Endothelial cell of umbilical vein (primary cell): ENCODE measurements at regions of chr19 and their contacts with region 1.

Region 1: GRCh38 chr19:11137542-11138384 is 17.8 kb downstream of the SPC24 start:
- DNase-seq: peak; percentile 53
- H3K4me3 ChIP-seq: no peak overlapping the region
- H3K27ac ChIP-seq: peak overlapping the region; percentile 22
- H3K4me1 ChIP-seq: peaks cover 36% of the 10 kb centered on the region
- H3K27me3 ChIP-seq: no peaks in the 10 kb centered on the region
- CTCF ChIP-seq: peak; percentile 28 to 43
- POLR2A ChIP-seq: peak; percentile 17

Region 2: GRCh38 chr19:11155373-11156120 is 17.8 kb after region 1 on chr19 and contains the start of gene SPC24:
- CTCF ChIA-PET with region 1: interaction called, 13 read pairs
- POLR2A ChIA-PET with region 1: interaction called, 4 read pairs
- dilution Hi-C with region 1: no loop called
- intact Hi-C with region 1: loop called (anchors 2 kb)
- DNase-seq: peak; percentile 99
- H3K4me3 ChIP-seq: peak within 1 kb of the TSS; percentile 73 to 97 (median 94)
- H3K27ac ChIP-seq: peak within 1 kb of the TSS; percentile 75
- H3K4me1 ChIP-seq: peaks cover 28% of the 10 kb centered on the region
- H3K27me3 ChIP-seq: no peaks in the 10 kb centered on the region
- CTCF ChIP-seq: no peak
- POLR2A ChIP-seq: peak; percentile 55
- total RNA-seq, gene SPC24: 68.5 and 70.0 TPM in 2 replicates

Region 3: DNA sequence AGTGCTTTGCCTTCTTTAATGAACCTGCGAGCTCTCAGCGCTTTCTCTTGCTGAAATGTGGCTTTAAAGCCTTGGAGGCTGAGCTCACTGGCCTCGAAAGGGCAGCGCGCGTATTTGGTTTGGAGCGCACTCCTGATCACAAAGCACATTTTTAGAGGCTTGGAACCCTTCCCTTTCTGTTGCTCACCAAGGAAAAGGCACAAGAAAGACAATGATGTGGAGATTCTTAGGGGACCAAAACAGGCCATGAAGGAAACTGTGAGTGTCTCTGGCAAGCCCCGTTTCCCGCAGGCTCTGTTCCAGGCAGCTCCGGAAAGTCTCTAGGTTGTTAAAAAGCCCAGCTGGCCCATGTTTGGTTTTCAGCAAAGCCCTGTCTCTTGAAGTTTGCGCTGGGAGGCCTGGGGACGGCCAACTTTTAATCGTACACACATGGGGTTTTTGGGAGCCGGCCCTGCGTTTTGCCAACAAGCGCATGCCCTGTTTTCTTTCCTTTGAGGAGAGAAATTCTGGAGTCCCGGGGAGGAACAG is 27.2 kb after region 1 on chr19:
- CTCF ChIA-PET with region 1: interaction called, 14 read pairs
- POLR2A ChIA-PET with region 1: interaction called, 5 read pairs
- dilution Hi-C with region 1: no loop called
- intact Hi-C with region 1: loop called (anchors 1 kb)
- DNase-seq: peak; percentile 51
- H3K4me3 ChIP-seq: no peak overlapping the region
- H3K27ac ChIP-seq: peak overlapping the region; percentile 35
- H3K4me1 ChIP-seq: peaks cover 31% of the 10 kb centered on the region
- H3K27me3 ChIP-seq: no peaks in the 10 kb centered on the region
- CTCF ChIP-seq: no peak
- POLR2A ChIP-seq: no peak

Region 4: GRCh38 chr19:11197264-11198174 is 59.8 kb after region 1 on chr19 and contains the start of gene KANK2:
- CTCF ChIA-PET with region 1: interaction called, 10 read pairs
- POLR2A ChIA-PET with region 1: no interaction called
- dilution Hi-C with region 1: no loop called
- intact Hi-C with region 1: loop called (anchors 2 kb)
- DNase-seq: peak; percentile 71
- H3K4me3 ChIP-seq: peak within 1 kb of the TSS; percentile 52 to 87 (median 69)
- H3K27ac ChIP-seq: peak within 1 kb of the TSS; percentile 71
- H3K4me1 ChIP-seq: peaks cover 19% of the 10 kb centered on the region
- H3K27me3 ChIP-seq: no peaks in the 10 kb centered on the region
- CTCF ChIP-seq: no peak
- POLR2A ChIP-seq: peak; percentile 84
- total RNA-seq, gene KANK2: 77.9 and 78.0 TPM in 2 replicates

Region 5: DNA sequence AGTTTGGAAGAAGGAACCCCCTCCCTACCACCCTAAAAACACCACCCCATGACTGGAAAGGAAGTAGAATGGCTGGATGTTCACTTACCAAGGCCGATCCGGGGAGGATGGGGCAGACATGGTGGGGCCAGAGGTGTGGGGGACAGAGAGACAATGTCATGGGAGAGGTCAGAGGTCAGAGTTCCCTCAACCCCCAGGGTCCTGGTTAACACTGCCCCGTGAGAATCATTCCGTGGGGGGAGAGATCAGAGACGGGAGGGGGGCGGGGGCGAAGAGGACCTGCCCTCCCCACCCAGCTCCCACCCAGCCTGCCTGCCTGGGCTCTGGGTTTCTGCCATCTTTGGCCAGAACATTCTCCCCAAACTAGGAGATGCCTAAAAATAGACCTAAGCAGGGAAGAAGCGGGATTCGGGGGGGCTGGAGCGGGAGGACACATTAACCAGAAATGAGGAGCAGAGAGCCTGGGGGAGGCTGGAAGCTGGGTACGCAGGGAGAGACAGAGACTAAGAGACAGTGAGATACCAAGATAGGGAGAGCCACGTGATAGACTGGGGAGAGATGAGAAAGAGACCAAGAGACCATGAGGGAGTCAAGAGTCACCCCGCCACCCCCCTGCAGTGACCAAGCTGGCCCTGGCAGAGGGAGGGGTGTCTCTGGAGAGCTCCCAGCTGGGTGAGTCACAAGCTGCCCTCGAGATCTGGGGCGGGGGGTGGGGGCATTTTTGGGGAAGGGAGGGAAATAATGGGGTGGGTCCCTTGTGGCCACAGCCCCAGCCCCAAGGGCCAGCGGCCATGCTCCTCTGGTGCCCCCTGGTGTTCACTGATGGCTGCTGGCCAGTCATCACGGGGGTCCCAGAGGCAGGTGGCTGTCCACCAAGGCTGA is 65.7 kb after region 1 on chr19:
- CTCF ChIA-PET with region 1: interaction called, 10 read pairs
- POLR2A ChIA-PET with region 1: no interaction called
- dilution Hi-C with region 1: no loop called
- intact Hi-C with region 1: loop called (anchors 1 kb)
- DNase-seq: peak; percentile 54
- H3K4me3 ChIP-seq: no peak overlapping the region
- H3K27ac ChIP-seq: peak overlapping the region; percentile 49
- H3K4me1 ChIP-seq: peaks cover 5% of the 10 kb centered on the region
- H3K27me3 ChIP-seq: no peaks in the 10 kb centered on the region
- CTCF ChIP-seq: peak; percentile 80 to 93
- POLR2A ChIP-seq: no peak

Region 6: DNA sequence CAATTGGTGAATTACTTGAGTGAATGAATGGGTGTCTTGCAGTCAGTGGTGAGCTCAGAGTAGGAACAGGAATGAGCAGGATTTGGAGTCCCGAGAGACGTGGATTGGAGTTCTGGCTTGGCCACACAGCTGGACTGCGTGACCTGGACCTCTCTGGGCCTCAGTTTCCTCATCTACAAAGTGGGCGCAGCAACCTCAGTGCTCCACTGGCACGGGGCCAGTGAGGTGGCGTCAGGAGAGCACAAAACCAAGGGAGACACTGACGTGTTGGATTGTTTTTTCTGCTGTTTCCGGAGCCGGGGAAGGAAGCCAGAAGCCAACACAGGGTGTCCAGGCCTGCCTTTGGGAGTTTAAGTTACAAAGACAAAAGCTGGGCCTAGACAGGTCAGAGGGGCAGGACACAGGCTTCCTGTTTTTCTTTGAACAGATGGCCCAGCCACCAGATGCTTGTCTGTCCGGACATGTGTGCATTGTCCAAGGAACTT is 131.1 kb after region 1 on chr19:
- CTCF ChIA-PET with region 1: no interaction called
- POLR2A ChIA-PET with region 1: no interaction called
- dilution Hi-C with region 1: no loop called
- intact Hi-C with region 1: loop called (anchors 2 kb)
- DNase-seq: peak; percentile 100
- H3K4me3 ChIP-seq: no peak overlapping the region
- H3K27ac ChIP-seq: peak overlapping the region; percentile 99
- H3K4me1 ChIP-seq: peaks cover 47% of the 10 kb centered on the region
- H3K27me3 ChIP-seq: no peaks in the 10 kb centered on the region
- CTCF ChIP-seq: no peak
- POLR2A ChIP-seq: peak; percentile 89